Activated T-helper 1 cell treated with anti-CD3 and anti-CD28 coated beads, Interleukin-12 subunit alpha, Interleukin-12 subunit beta, Interleukin-2, Interleukin-4 antibody, amounts not matched to agents 30 ng/mL and 10 ng/mL and 1 ng/mL, durations not matched to agents 14 hours and 24 hours and 36 hours (primary cell): ENCODE measurements at regions of chr1 and their contacts with region 1.

Region 1: DNA sequence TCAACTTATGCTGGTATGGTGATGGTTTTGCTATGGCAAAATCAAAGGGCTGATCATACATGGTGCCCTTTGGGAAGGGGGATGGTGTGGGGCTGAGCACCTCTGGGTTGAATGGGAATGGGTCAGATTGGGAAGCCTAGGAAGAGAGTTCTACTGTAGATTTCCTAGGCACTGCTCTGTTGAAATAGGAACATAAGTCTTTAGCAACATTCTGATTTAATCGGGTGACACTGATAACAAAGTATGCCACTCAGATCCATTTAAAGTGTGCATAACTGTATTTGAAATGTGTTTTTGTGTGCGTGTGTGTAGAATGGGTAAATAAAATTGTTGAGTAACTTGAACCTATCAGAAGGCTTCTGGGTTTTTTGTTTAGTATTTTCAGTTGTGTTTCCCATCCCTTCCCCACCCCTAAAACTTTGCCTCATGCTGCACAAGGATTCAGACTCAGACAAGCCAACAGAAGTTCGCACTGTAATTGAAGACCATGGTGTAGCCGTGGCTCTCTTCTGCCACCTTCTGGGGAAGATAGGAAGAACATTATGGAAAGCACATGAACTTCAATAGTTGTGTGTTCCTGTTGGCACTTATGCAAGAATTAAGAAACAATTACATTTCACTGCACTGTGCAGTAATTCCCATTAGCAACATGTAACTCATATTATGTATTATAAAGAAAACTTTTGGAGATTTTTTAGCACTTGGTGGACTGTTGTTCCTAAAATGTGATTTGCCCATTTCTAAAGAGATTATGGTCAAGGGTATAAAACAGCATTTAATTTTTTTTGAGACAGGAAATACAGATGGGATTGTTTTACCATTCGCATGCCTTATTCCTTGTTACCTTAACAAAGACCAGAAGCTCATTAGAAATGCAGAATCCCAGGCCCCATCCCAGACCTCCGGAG is 10.9 kb upstream of the C4BPB start:
- DNase-seq: peak; percentile 60
- H3K4me3 Mint-ChIP-seq: no peak overlapping the region
- H3K27ac Mint-ChIP-seq: no peak overlapping the region
- H3K4me1 Mint-ChIP-seq: no peaks in the 10 kb centered on the region
- H3K27me3 Mint-ChIP-seq: peaks cover 19% of the 10 kb centered on the region

Region 2: GRCh38 chr1:206770531-206771337 is 307.0 kb before region 1 on chr1 and contains the start of gene IL19:
- intact Hi-C with region 1: no loop called
- DNase-seq: no peak
- H3K4me3 Mint-ChIP-seq: peak within 1 kb of the TSS; percentile 41
- H3K27ac Mint-ChIP-seq: no peak within 1 kb of the TSS
- H3K4me1 Mint-ChIP-seq: peaks cover 75% of the 10 kb centered on the region
- H3K27me3 Mint-ChIP-seq: peaks cover 43% of the 10 kb centered on the region
- total RNA-seq, gene IL19: not detected in 2 replicates

Region 3: GRCh38 chr1:206935491-206936067 is 142.1 kb before region 1 on chr1:
- intact Hi-C with region 1: loop called (anchors 1 kb)
- DNase-seq: peak; percentile 28
- H3K4me3 Mint-ChIP-seq: no peak overlapping the region
- H3K27ac Mint-ChIP-seq: no peak overlapping the region
- H3K4me1 Mint-ChIP-seq: peaks cover 12% of the 10 kb centered on the region
- H3K27me3 Mint-ChIP-seq: peaks cover 4% of the 10 kb centered on the region

Region 4: GRCh38 chr1:207004981-207005830 is 72.5 kb before region 1 on chr1:
- intact Hi-C with region 1: loop called (anchors 1 kb)
- DNase-seq: no peak
- H3K4me3 Mint-ChIP-seq: no peak overlapping the region
- H3K27ac Mint-ChIP-seq: no peak overlapping the region
- H3K4me1 Mint-ChIP-seq: peaks cover 6% of the 10 kb centered on the region
- H3K27me3 Mint-ChIP-seq: peaks cover 30% of the 10 kb centered on the region

Region 5: GRCh38 chr1:207145401-207146058 is 67.8 kb after region 1 on chr1:
- intact Hi-C with region 1: no loop called
- DNase-seq: no peak
- H3K4me3 Mint-ChIP-seq: no peak overlapping the region
- H3K27ac Mint-ChIP-seq: no peak overlapping the region
- H3K4me1 Mint-ChIP-seq: no peaks in the 10 kb centered on the region
- H3K27me3 Mint-ChIP-seq: no peaks in the 10 kb centered on the region